ENCODE measurements at regions of chr1 and their contacts with region 1.

Region 1: GRCh38 chr1:207797229-207797961 is 45.5 kb downstream of the CD46 start:
- DNase-seq: peak; percentile 70 to 84
- ATAC-seq: peak; percentile 82 to 90 (median 89)
- H3K4me3 ChIP-seq: no peak overlapping the region
- H3K4me3 Mint-ChIP-seq: no peak overlapping the region
- H3K27ac ChIP-seq: no peak overlapping the region
- H3K27ac Mint-ChIP-seq: no peak overlapping the region
- H3K4me1 ChIP-seq: peaks cover 17% of the 10 kb centered on the region
- H3K4me1 Mint-ChIP-seq: peaks cover 36 to 39% of the 10 kb centered on the region in 2 donors
- H3K27me3 ChIP-seq: no peaks in the 10 kb centered on the region
- H3K27me3 Mint-ChIP-seq: no peaks in the 10 kb centered on the region
- CTCF ChIP-seq: peak; percentile 87

Region 2: DNA sequence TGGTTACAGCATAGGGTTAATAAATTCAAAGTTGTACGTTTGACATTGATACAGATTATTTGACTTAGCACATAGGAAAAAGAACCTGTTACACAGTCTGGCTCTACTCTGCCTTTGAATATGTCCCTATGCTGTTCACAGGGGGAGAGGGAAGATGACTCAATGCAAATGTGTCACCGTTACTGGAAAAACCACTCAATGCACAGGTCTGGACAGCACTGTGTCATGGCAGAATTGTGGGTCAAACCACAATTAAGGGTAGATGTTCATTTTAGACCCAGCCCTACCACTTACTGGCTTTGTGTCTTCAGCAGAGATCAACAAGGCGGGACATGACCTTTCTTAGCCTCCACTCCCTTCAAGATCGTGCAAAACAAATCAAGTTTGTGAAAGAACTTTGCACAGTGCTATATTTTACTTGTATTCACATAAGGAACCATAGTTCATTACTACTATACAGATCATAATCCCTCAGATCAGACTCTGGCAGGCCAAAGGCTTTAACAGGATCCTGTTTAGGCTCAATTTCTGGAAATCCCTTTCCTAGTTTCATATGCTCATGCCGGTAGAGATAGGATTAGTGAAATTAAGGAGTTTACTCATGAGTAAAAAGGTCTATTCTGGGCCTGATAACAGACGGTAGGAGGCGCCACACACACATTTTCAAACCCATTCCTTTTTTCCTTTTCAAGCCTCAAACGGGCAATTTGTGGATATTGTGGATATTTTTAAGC is 1207.2 kb before region 1 on chr1:
- intact Hi-C with region 1: no loop called
- DNase-seq: peak in 1 of 2 donors; percentile 72
- ATAC-seq: peak; percentile 80 to 88 (median 83)
- H3K4me3 ChIP-seq: no peak overlapping the region
- H3K4me3 Mint-ChIP-seq: peak overlapping the region; percentile 40
- H3K27ac ChIP-seq: peak overlapping the region; percentile 61
- H3K27ac Mint-ChIP-seq: peak overlapping the region; percentile 89 to 90
- H3K4me1 ChIP-seq: peaks cover 30% of the 10 kb centered on the region
- H3K4me1 Mint-ChIP-seq: peaks cover 58 to 61% of the 10 kb centered on the region in 2 donors
- H3K27me3 ChIP-seq: no peaks in the 10 kb centered on the region
- H3K27me3 Mint-ChIP-seq: no peaks in the 10 kb centered on the region
- CTCF ChIP-seq: peak; percentile 36

Region 3: GRCh38 chr1:207474210-207474609 is 323.2 kb before region 1 on chr1:
- intact Hi-C with region 1: no loop called
- DNase-seq: no peak
- ATAC-seq: no peak
- H3K4me3 ChIP-seq: no peak overlapping the region
- H3K4me3 Mint-ChIP-seq: no peak overlapping the region
- H3K27ac ChIP-seq: no peak overlapping the region
- H3K27ac Mint-ChIP-seq: no peak overlapping the region
- H3K4me1 ChIP-seq: no peaks in the 10 kb centered on the region
- H3K4me1 Mint-ChIP-seq: peaks cover 0 to 4% of the 10 kb centered on the region in 2 donors
- H3K27me3 ChIP-seq: no peaks in the 10 kb centered on the region
- H3K27me3 Mint-ChIP-seq: peaks cover 3 to 17% of the 10 kb centered on the region in 2 donors
- CTCF ChIP-seq: no peak

Region 4: DNA sequence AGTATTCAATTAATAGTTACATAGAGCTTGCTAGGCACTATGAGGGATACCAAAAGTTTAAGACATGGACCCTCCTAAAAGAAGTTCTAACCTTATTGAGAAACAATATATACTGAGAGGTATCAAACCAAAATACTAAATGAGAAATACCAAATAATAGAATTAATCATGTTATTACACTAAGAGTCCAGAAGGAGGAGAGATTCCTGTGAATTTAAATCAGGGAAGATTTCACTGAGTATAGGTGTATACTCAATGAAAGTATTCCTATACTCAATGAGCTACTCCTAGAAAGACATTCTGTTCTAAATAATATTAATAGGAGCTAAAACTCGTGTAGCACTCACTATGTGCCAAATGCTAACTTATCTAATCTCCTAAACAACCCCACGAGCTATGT is 143.1 kb before region 1 on chr1:
- intact Hi-C with region 1: loop called (anchors 10 kb)
- DNase-seq: no peak
- ATAC-seq: no peak
- H3K4me3 ChIP-seq: no peak overlapping the region
- H3K4me3 Mint-ChIP-seq: no peak overlapping the region
- H3K27ac ChIP-seq: no peak overlapping the region
- H3K27ac Mint-ChIP-seq: no peak overlapping the region
- H3K4me1 ChIP-seq: no peaks in the 10 kb centered on the region
- H3K4me1 Mint-ChIP-seq: no peaks in the 10 kb centered on the region
- H3K27me3 ChIP-seq: no peaks in the 10 kb centered on the region
- H3K27me3 Mint-ChIP-seq: peaks cover 8 to 22% of the 10 kb centered on the region in 2 donors
- CTCF ChIP-seq: no peak

Region 5: DNA sequence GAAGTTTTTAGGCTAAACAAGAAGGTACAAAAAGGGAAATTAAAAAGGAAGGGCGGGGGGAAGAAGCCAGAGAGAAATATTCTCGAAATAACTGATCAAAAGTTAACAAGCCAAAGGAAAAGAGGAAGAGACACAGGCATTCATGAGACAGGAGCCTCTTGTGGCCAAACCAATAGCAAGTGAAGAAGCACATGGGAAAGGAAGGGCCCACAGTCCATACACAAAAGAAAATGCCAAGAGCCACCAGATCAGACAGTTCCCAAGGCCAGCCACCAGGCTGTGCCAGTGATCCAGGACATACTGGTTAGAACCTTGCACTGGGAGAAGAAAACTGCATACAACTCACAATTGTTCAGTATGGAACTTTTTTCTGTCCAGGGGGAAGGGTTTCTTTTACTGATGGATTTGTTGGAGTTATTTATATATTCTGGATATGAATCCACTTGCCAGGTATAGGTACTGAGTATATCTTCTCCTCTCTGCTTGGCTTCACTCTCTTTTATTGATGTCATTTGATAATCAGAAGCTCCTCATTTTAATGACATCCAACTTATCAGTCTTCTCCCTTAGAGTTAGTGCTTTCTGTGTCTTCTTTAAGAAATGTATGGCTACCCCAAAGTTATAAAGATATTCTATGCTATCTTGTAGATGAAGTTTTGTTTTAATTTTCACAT is 31.2 kb after region 1 on chr1:
- intact Hi-C with region 1: loop called (anchors 2 kb)
- DNase-seq: peak; percentile 47 to 84
- ATAC-seq: peak; percentile 14 to 36 (median 18)
- H3K4me3 ChIP-seq: no peak overlapping the region
- H3K4me3 Mint-ChIP-seq: no peak overlapping the region
- H3K27ac ChIP-seq: peak overlapping the region; percentile 12
- H3K27ac Mint-ChIP-seq: peak overlapping the region; percentile 99
- H3K4me1 ChIP-seq: peaks cover 76% of the 10 kb centered on the region
- H3K4me1 Mint-ChIP-seq: peaks cover 81 to 85% of the 10 kb centered on the region in 2 donors
- H3K27me3 ChIP-seq: no peaks in the 10 kb centered on the region
- H3K27me3 Mint-ChIP-seq: peaks cover 0 to 3% of the 10 kb centered on the region in 2 donors
- CTCF ChIP-seq: peak; percentile 67

Region 6: DNA sequence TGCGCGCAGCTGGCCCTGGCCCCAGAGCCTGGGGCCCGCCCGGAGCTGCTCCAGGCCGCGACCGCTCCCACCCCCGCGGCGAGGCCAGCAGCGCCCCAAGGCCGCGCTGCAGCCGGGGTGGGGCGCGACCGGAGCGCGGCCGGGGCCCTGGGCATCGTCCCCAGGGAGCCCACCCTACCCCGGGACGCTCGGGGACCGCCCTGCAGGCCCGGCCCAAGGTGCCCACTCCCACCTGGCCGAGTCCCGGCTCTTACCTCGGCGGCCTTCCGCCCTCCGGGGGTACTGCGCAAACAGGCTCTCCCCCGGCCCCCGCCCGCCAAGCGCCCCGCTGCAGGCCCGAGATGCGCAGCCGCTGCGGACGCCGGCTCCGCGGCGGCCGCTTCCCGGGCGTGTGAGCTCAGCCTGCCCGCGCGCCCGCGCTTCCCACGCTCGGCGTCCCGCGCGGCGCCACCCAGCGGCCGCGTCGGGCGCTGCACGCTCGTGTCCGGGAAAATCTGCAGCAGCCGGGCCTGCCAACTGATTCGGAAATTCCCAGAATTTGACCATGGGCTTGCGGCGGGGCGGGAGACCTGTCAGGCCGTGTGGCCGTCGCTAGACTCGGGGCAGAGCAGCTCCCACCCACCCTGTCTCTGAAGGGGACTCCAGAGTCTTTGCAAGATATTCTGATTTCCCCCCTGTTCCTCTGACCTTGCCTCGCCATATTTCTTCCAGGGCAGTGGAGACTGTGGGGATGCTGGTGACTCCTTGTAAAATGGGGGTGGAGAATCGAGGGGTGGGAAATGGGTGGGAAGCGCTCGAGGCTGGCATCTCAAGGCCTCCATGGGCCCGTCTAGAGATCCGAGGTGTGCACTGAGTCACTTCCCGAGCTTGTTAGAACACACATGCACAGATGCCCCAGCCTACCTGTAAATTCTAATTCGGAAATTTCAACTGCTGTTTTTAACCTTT is 71.7 kb after region 1 on chr1:
- intact Hi-C with region 1: loop called (anchors 2 kb)
- DNase-seq: peak; percentile 78 to 92
- ATAC-seq: peak; percentile 76 to 86 (median 84)
- H3K4me3 ChIP-seq: peak overlapping the region; percentile 85
- H3K4me3 Mint-ChIP-seq: peak overlapping the region; percentile 94
- H3K27ac ChIP-seq: peak overlapping the region; percentile 82
- H3K27ac Mint-ChIP-seq: peak overlapping the region in 1 of 2 donors; percentile 84
- H3K4me1 ChIP-seq: peaks cover 66% of the 10 kb centered on the region
- H3K4me1 Mint-ChIP-seq: peaks cover 80 to 84% of the 10 kb centered on the region in 2 donors
- H3K27me3 ChIP-seq: no peaks in the 10 kb centered on the region
- H3K27me3 Mint-ChIP-seq: no peaks in the 10 kb centered on the region
- CTCF ChIP-seq: peak; percentile 84

Region 7: DNA sequence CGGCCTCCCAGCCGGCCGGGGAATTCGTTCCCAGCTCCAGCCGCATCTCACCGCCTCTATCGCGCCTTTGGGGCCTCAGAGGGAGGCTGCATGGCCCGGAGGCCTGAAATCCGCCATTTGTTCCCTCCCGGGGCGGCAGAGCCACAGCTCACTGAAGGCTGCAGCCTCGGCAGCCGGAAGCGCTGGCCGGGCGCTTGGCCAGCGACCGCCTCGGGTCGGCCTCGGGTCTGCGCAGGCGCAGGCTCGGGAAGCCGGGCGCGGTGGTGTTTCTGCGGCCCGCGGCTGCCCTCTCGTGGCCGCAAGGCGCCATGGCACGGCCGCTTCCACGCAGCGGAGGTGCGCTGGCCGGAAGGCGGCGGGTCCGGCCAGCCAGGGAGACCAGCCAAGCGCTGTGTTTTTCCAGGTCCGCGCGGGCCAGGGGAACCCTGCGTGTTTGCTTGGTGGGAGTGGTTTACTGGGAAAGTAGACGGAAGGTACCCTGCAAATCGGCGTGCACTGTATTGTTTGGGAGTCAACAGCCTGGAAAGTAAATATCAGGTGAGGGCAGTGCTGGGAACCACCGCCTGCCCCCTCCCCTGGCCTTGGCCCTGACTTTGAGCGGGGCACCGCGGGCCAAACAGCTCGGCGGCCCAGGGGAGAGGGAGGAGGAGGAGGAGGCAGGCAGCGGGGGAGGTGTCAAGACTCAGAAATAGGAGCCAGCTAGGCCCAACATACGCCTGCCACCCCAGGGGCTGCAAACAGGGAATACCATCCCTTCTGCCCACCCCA is 166.2 kb after region 1 on chr1:
- intact Hi-C with region 1: loop called (anchors 10 kb)
- DNase-seq: peak; percentile 90 to 92
- ATAC-seq: peak; percentile 95 to 96 (median 95)
- H3K4me3 ChIP-seq: peak overlapping the region; percentile 85
- H3K4me3 Mint-ChIP-seq: peak overlapping the region; percentile 80
- H3K27ac ChIP-seq: peak overlapping the region; percentile 84
- H3K27ac Mint-ChIP-seq: peak overlapping the region; percentile 45 to 87
- H3K4me1 ChIP-seq: peaks cover 21% of the 10 kb centered on the region
- H3K4me1 Mint-ChIP-seq: peaks cover 12 to 17% of the 10 kb centered on the region in 2 donors
- H3K27me3 ChIP-seq: peaks cover 9% of the 10 kb centered on the region
- H3K27me3 Mint-ChIP-seq: peaks cover 25 to 37% of the 10 kb centered on the region in 2 donors
- CTCF ChIP-seq: peak; percentile 99

Measured in natural killer cell (primary cell).